Activated naive CD4-positive, alpha-beta T cell treated with anti-CD3 and anti-CD28 coated beads for 36 hours (primary cell): ENCODE measurements at regions of chr3 and their contacts with region 1.

Region 1: GRCh38 chr3:141460097-141460704 is 26.6 kb upstream of the RASA2 start:
- DNase-seq: peak; percentile 96
- H3K4me3 Mint-ChIP-seq: no peak overlapping the region
- H3K27ac Mint-ChIP-seq: no peak overlapping the region
- H3K4me1 Mint-ChIP-seq: peaks cover 6% of the 10 kb centered on the region
- H3K27me3 Mint-ChIP-seq: no peaks in the 10 kb centered on the region

Region 2: DNA sequence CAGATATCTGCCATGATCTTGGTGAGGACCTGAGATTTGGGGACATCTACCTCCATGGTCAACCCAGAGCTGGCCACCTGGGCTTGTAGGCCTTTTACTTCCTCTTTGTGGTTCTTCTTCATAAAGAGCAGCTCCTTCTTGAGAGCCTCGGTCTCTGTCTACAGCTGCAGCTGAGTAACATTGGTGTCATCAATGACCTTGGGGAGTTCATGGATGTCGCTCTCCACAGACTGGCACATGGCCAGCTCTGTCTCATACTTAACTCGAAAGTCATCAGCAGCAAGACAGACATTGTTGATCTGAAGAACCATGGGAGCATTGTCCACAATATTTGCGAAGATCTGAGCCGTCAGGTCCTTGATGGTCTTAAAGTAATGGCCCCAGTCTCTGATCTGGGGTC is 11.0 kb after region 1 on chr3:
- CTCF ChIA-PET with region 1: interaction called, 33 read pairs
- intact Hi-C with region 1: loop called (anchors 2 kb)
- DNase-seq: no peak
- H3K4me3 Mint-ChIP-seq: no peak overlapping the region
- H3K27ac Mint-ChIP-seq: no peak overlapping the region
- H3K4me1 Mint-ChIP-seq: peaks cover 10% of the 10 kb centered on the region
- H3K27me3 Mint-ChIP-seq: no peaks in the 10 kb centered on the region

Region 3: GRCh38 chr3:141570068-141570467 is 109.9 kb after region 1 on chr3:
- CTCF ChIA-PET with region 1: interaction called, 133 read pairs
- intact Hi-C with region 1: no loop called
- DNase-seq: no peak
- H3K4me3 Mint-ChIP-seq: no peak overlapping the region
- H3K27ac Mint-ChIP-seq: no peak overlapping the region
- H3K4me1 Mint-ChIP-seq: peaks cover 12% of the 10 kb centered on the region
- H3K27me3 Mint-ChIP-seq: no peaks in the 10 kb centered on the region

Region 4: GRCh38 chr3:141690431-141691072 is 230.4 kb after region 1 on chr3:
- CTCF ChIA-PET with region 1: no interaction called
- intact Hi-C with region 1: no loop called
- DNase-seq: no peak
- H3K4me3 Mint-ChIP-seq: no peak overlapping the region
- H3K27ac Mint-ChIP-seq: no peak overlapping the region
- H3K4me1 Mint-ChIP-seq: peaks cover 23% of the 10 kb centered on the region
- H3K27me3 Mint-ChIP-seq: no peaks in the 10 kb centered on the region

Region 5: DNA sequence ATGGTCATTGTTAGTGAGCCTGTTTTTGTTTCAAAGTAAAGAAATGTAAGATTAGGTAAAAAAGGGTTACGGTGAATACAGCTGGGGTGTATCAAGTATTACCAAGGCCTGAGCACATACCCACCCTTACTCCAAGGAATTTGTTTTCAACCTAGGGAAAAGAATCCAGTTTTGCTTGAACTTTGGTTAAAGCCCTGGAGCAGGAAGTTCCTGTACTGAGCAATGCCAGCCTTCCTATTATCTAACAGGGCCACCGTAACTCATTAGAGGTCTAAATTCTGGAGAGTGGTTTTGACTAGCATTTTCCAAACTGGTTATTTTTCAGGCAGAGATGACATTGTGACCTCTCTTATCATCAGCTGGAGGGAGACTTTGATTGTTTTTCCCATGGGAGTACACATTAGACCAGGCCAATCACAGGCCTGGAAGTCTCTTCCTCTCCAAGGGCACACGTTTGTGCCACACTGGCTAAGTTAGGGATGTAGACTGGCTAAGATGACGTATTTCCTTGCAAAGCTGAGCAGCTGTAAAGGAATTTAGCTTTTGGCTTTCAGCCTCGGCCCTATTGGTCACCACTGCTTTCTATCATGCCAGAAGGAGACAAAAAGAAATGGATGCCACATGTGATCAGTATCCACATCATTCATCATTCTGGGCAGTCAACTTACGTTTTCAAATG is 250.5 kb after region 1 on chr3:
- CTCF ChIA-PET with region 1: no interaction called
- intact Hi-C with region 1: no loop called
- DNase-seq: no peak
- H3K4me3 Mint-ChIP-seq: no peak overlapping the region
- H3K27ac Mint-ChIP-seq: no peak overlapping the region
- H3K4me1 Mint-ChIP-seq: peaks cover 4% of the 10 kb centered on the region
- H3K27me3 Mint-ChIP-seq: no peaks in the 10 kb centered on the region

Region 6: GRCh38 chr3:141763088-141763750 is 303.0 kb after region 1 on chr3 and contains the start of gene GRK7:
- CTCF ChIA-PET with region 1: no interaction called
- intact Hi-C with region 1: no loop called
- DNase-seq: no peak
- H3K4me3 Mint-ChIP-seq: no peak within 1 kb of the TSS
- H3K27ac Mint-ChIP-seq: no peak within 1 kb of the TSS
- H3K4me1 Mint-ChIP-seq: no peaks in the 10 kb centered on the region
- H3K27me3 Mint-ChIP-seq: no peaks in the 10 kb centered on the region
- total RNA-seq, gene GRK7: not detected

Region 7: GRCh38 chr3:141913150-141913811 is 453.1 kb after region 1 on chr3:
- CTCF ChIA-PET with region 1: no interaction called
- intact Hi-C with region 1: loop called (anchors 1 kb)
- DNase-seq: peak; percentile 72
- H3K4me3 Mint-ChIP-seq: no peak overlapping the region
- H3K27ac Mint-ChIP-seq: no peak overlapping the region
- H3K4me1 Mint-ChIP-seq: peaks cover 2% of the 10 kb centered on the region
- H3K27me3 Mint-ChIP-seq: no peaks in the 10 kb centered on the region